ENCODE measurements at regions of chr4 and their contacts with region 1.

Region 1: DNA sequence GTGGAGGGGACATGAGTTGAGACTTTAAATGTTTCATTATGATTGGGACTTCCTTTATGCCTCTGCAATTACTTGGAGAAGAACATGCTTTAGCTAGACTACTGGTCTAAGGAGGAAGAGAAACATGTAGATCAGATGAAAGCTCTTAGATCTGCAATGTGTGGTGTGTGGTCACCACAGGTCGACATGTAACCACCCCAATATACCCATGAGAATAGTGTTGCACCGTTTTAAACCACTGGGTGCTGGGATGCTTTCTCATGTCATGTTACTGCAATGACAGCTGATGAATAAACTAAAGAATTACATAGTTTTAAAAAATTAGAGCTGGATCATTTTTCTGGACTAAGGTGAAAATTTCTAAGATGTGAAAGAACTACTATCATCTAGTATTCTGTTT is 1039.7 kb downstream of the RAPGEF2 start:
- DNase-seq: no peak
- H3K4me3 ChIP-seq: no peak overlapping the region
- H3K27ac ChIP-seq: no peak overlapping the region
- H3K4me1 ChIP-seq: no peaks in the 10 kb centered on the region
- H3K27me3 ChIP-seq: no peaks in the 10 kb centered on the region
- CTCF ChIP-seq: no peak

Region 2: DNA sequence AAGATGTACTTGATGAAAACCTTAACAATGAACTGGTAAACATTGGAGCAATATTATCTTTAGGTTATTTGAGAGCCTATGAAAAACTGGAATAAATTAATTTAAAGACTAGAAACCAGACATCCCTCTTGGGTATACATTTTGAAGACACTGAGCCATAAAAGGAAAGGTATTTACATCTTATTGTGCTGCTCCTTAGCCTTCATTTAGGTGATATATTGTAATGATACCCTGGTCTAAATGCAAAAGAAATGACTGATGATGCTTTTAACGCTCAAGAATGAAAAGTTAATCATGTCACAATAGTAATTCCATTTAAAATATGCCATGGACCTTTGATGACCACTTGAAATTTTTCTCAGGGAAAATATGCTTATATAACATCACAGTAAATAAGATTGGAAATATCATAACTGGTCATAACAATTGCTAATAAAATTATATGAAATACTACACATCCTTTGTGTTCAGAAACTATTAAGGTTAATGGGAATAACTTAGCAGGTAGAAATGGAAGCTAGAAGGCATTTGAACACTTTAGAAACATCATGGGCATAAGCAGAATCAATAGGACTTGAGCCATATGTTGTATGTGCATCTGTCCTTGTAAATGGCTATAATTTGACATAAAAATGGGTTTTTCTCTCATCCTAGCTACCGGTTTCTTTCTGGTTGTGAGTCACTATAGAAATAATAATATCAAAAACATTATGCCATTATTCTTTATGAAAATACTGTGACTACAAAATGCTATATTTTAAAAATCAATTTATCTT is 60.0 kb before region 1 on chr4:
- intact Hi-C with region 1: loop called (anchors 10 kb)
- DNase-seq: no peak
- H3K4me3 ChIP-seq: no peak overlapping the region
- H3K27ac ChIP-seq: no peak overlapping the region
- H3K4me1 ChIP-seq: no peaks in the 10 kb centered on the region
- H3K27me3 ChIP-seq: no peaks in the 10 kb centered on the region
- CTCF ChIP-seq: no peak

Measured in colonic mucosa (tissue), 4 donors.